ENCODE measurements at regions of chr20 and their contacts with region 1.

Region 1: DNA sequence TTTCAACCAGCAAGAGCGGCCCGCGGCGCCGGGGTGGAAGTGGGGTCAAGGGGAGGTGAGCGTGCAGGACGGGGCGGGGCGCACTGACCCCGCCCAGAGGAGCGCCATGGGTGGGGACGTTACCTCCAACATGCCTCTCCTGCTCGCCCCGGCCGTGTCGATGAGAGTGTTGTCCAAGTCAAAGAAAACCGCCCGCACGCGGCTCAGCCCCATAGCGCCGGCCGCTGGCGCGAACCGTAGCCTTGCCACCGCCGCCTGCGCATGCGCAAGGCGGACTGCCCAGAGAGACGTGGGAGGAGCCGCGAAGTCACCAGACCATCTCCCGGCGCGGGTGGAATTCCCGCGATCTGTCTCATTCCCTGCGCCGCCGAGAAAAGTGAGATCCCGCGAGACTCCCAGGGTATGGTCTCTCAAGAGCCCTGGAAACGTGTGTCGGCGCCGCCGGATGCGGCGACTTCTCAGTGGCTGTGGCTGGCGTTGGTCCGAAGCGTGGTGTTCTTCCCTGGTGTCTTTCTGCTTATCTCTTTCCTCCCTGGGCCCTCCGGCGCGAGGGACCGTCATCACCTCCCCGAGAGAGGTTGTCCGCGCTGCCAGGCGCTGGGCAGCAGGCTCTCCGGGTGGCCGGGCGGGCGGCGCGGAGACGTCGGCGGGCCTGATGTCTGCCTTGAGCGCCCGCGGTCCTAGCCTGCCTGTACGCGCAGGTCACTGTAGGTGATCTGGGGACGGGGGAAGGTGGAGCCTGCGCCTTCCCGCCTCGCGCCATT is at the start of gene NANP:
- DNase-seq: peak; percentile 96
- H3K4me3 Mint-ChIP-seq: peak within 1 kb of the TSS; percentile 91
- H3K27ac Mint-ChIP-seq: peak within 1 kb of the TSS; percentile 95
- H3K4me1 Mint-ChIP-seq: peaks cover 18% of the 10 kb centered on the region
- H3K27me3 Mint-ChIP-seq: no peaks in the 10 kb centered on the region
- total RNA-seq, gene NANP: 6.4 to 6.9 TPM

Region 2: DNA sequence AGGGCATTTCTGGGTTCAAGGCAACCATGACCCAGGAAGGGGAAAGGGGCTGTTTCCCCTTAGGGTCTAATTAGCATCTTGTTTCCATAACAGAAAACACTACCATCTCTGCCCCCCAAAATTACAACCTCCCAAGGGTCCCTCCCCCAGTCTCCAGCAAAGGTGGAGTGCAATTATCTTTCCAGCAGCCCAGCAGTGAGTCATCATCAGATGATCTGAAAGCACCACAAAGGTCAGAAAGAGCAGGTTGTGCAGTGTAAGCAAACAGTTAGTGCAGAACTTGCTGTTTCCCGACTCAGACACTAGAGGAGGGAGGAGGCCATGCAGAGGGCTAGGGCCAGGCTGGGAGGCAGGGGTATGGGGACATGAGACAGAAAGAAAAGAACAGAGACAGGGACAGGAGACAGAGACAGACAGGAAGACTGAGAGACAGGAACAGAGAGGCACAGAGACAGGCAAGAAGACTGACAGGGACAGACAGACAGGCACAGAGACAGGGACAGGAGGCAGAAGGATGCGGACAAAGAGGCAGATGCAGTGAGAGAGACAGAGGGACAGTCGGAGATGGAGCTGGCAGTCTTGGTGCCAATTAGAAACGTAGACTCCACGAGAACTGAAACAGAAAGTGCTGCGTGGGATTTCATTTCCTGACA is 313.5 kb before region 1 on chr20:
- CTCF ChIA-PET with region 1: no interaction called
- intact Hi-C with region 1: loop called (anchors 2 kb)
- DNase-seq: peak; percentile 81
- H3K4me3 Mint-ChIP-seq: peak overlapping the region; percentile 56
- H3K27ac Mint-ChIP-seq: peak overlapping the region; percentile 76
- H3K4me1 Mint-ChIP-seq: peaks cover 31% of the 10 kb centered on the region
- H3K27me3 Mint-ChIP-seq: no peaks in the 10 kb centered on the region

Region 3: GRCh38 chr20:25486377-25486776 is 137.5 kb before region 1 on chr20:
- CTCF ChIA-PET with region 1: no interaction called
- intact Hi-C with region 1: loop called (anchors 10 kb)
- DNase-seq: peak; percentile 16
- H3K4me3 Mint-ChIP-seq: no peak overlapping the region
- H3K27ac Mint-ChIP-seq: no peak overlapping the region
- H3K4me1 Mint-ChIP-seq: peaks cover 30% of the 10 kb centered on the region
- H3K27me3 Mint-ChIP-seq: no peaks in the 10 kb centered on the region

Region 4: GRCh38 chr20:25584905-25585704 is 38.8 kb before region 1 on chr20 and contains the start of gene NINL:
- CTCF ChIA-PET with region 1: no interaction called
- intact Hi-C with region 1: loop called (anchors 1 kb)
- DNase-seq: peak; percentile 60
- H3K4me3 Mint-ChIP-seq: peak within 1 kb of the TSS; percentile 74
- H3K27ac Mint-ChIP-seq: no peak within 1 kb of the TSS
- H3K4me1 Mint-ChIP-seq: peaks cover 6% of the 10 kb centered on the region
- H3K27me3 Mint-ChIP-seq: peaks cover 4% of the 10 kb centered on the region
- total RNA-seq, gene NINL: 2.6 to 2.9 TPM

Region 5: DNA sequence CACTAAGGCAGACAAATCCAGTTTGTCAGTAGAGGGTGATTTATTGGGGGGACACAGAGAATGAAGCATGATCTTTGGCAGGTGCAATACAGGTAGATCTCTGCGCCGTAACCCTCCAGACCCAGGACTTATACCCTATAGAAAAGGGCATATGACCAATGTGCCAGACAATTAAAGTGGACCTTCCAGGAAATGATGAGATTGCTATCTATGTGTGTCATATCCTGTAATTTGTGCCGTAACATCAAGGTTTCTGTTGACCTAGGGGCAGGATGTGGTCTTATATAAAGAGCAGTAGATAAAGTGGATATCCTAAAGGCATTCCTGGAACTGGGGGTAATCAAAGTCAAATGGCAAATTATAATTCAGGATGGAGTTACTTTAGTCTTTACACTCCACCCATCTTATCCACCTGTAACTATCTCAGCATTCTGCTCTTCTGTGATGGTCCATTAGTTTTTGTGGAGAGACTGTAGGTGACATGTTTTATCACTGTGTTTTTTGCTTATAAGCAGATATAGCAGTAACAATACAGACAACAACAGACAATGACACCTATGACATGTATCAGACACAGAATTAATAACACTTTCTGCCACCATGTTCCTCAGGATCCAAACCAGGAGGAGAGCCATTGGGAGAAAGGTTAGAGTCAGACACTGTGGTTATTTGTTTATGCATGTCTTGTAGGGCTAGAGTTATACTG is 115.8 kb after region 1 on chr20:
- CTCF ChIA-PET with region 1: no interaction called
- intact Hi-C with region 1: loop called (anchors 1 kb)
- DNase-seq: no peak
- H3K4me3 Mint-ChIP-seq: no peak overlapping the region
- H3K27ac Mint-ChIP-seq: peak overlapping the region; percentile 82
- H3K4me1 Mint-ChIP-seq: peaks cover 14% of the 10 kb centered on the region
- H3K27me3 Mint-ChIP-seq: no peaks in the 10 kb centered on the region

Region 6: DNA sequence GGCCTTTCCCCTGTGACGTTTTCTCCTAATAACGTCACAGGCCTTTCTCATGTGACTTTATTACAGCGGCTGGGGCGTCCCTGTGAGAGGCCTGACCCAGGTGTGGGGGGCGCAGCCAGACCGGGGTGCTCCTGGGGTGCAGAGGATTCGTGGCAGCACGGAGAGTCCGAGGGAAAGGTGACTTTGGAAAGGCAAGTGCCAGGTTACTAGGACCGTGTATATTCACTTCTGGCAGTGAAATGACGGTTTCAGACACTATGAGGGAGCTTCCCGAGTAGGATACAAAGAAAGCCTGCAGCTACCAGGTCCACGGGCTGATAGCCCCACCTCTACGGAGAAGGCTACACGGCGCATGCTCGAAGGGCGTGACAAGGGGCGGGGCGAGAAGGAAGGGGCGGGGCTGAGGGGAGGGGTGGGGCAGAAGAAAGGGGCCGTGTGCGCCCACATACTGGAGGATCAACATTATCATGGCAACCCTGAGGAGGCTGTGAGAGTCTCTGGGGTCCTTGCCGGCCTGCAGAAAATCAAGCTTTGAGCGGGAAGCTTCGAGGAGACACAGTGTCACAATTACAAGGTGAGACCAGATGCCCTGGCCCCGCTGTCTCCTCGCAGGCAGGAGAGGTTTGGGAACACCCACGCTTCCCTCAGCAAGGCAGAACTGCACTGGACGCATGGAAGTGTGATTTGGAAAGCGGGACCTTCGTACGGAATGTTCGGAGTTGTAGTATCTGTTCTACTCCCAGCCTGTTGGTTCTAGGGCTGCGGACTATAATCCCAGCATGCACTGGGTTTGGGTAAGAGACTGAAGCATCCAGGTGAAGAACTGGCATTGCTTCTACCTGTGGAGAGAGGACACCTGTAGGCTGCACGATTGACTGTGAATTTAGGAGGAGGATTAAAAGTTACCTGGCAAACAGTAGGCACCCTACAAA is 127.1 kb after region 1 on chr20:
- CTCF ChIA-PET with region 1: no interaction called
- intact Hi-C with region 1: loop called (anchors 1 kb)
- DNase-seq: peak; percentile 76
- H3K4me3 Mint-ChIP-seq: peak overlapping the region; percentile 86
- H3K27ac Mint-ChIP-seq: peak overlapping the region; percentile 77
- H3K4me1 Mint-ChIP-seq: peaks cover 15% of the 10 kb centered on the region
- H3K27me3 Mint-ChIP-seq: no peaks in the 10 kb centered on the region